Endothelial cell of umbilical vein (primary cell): ENCODE measurements at regions of chr5 and their contacts with region 1.

Region 1: GRCh38 chr5:77630258-77631089 is 8.0 kb downstream of the OTP start:
- DNase-seq: no peak
- H3K4me3 ChIP-seq: peak overlapping the region in 1 of 3 experiments; percentile 14
- H3K27ac ChIP-seq: no peak overlapping the region
- H3K4me1 ChIP-seq: peaks cover 5% of the 10 kb centered on the region
- H3K27me3 ChIP-seq: peaks cover 61 to 100% of the 10 kb centered on the region in 2 experiments
- CTCF ChIP-seq: peak in 1 of 2 donors; percentile 6
- POLR2A ChIP-seq: no peak

Region 2: DNA sequence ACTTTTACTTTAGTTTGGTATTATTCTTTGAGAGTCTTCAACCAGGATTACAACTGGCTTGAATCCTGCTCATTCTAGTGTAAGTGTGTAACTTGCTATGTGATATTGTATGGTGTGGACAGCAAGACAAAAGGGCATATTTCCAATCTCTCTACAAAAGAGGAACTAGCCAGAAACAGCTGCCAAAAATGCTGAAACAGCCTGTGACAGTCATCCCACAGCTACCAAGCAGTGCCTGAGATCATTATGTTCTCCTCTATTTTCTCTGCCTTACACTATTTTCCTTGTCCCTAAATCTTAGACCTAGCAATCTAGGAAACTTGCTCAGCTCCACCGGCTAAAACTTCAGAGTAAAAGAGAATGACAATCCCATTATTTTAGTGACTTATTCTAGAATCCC is 181.2 kb before region 1 on chr5:
- CTCF ChIA-PET with region 1: no interaction called
- POLR2A ChIA-PET with region 1: no interaction called
- dilution Hi-C with region 1: no loop called
- intact Hi-C with region 1: no loop called
- DNase-seq: no peak
- H3K4me3 ChIP-seq: no peak overlapping the region
- H3K27ac ChIP-seq: no peak overlapping the region
- H3K4me1 ChIP-seq: no peaks in the 10 kb centered on the region
- H3K27me3 ChIP-seq: no peaks in the 10 kb centered on the region
- CTCF ChIP-seq: no peak
- POLR2A ChIP-seq: no peak

Region 3: GRCh38 chr5:77972469-77973252 is 342.2 kb after region 1 on chr5:
- CTCF ChIA-PET with region 1: no interaction called
- POLR2A ChIA-PET with region 1: no interaction called
- dilution Hi-C with region 1: no loop called
- intact Hi-C with region 1: loop called (anchors 5 kb)
- DNase-seq: no peak
- H3K4me3 ChIP-seq: peak overlapping the region in 2 of 3 experiments; percentile 19 to 33
- H3K27ac ChIP-seq: no peak overlapping the region
- H3K4me1 ChIP-seq: peaks cover 12% of the 10 kb centered on the region
- H3K27me3 ChIP-seq: peaks cover 63 to 69% of the 10 kb centered on the region in 2 experiments
- CTCF ChIP-seq: peak; percentile 19 to 52
- POLR2A ChIP-seq: no peak